ENCODE measurements at regions of chr16 and their contacts with region 1.

Region 1: GRCh38 chr16:3134564-3135417 is at the start of gene ZNF213:
- DNase-seq: peak; percentile 79 to 99 (median 89)
- ATAC-seq: peak; percentile 97
- H3K4me3 ChIP-seq: peak within 1 kb of the TSS; percentile 84
- H3K4me3 Mint-ChIP-seq: peak within 1 kb of the TSS; percentile 99
- H3K27ac ChIP-seq: peak within 1 kb of the TSS; percentile 91 to 92
- H3K27ac Mint-ChIP-seq: peak within 1 kb of the TSS; percentile 94
- H3K4me1 ChIP-seq: peaks cover 29% of the 10 kb centered on the region
- H3K4me1 Mint-ChIP-seq: peaks cover 38% of the 10 kb centered on the region
- H3K27me3 ChIP-seq: no peaks in the 10 kb centered on the region
- H3K27me3 Mint-ChIP-seq: no peaks in the 10 kb centered on the region
- CTCF ChIP-seq: no peak
- total RNA-seq, gene ZNF213: 1.6 to 2.2 TPM

Region 2: GRCh38 chr16:2795714-2796143 is 339.1 kb before region 1 on chr16:
- CTCF ChIA-PET with region 1: no interaction called
- POLR2A ChIA-PET with region 1: no interaction called
- intact Hi-C with region 1: no loop called
- DNase-seq: no peak
- ATAC-seq: no peak
- H3K4me3 ChIP-seq: no peak overlapping the region
- H3K4me3 Mint-ChIP-seq: no peak overlapping the region
- H3K27ac ChIP-seq: no peak overlapping the region
- H3K27ac Mint-ChIP-seq: no peak overlapping the region
- H3K4me1 ChIP-seq: no peaks in the 10 kb centered on the region
- H3K4me1 Mint-ChIP-seq: no peaks in the 10 kb centered on the region
- H3K27me3 ChIP-seq: no peaks in the 10 kb centered on the region
- H3K27me3 Mint-ChIP-seq: peaks cover 28% of the 10 kb centered on the region
- CTCF ChIP-seq: no peak

Region 3: DNA sequence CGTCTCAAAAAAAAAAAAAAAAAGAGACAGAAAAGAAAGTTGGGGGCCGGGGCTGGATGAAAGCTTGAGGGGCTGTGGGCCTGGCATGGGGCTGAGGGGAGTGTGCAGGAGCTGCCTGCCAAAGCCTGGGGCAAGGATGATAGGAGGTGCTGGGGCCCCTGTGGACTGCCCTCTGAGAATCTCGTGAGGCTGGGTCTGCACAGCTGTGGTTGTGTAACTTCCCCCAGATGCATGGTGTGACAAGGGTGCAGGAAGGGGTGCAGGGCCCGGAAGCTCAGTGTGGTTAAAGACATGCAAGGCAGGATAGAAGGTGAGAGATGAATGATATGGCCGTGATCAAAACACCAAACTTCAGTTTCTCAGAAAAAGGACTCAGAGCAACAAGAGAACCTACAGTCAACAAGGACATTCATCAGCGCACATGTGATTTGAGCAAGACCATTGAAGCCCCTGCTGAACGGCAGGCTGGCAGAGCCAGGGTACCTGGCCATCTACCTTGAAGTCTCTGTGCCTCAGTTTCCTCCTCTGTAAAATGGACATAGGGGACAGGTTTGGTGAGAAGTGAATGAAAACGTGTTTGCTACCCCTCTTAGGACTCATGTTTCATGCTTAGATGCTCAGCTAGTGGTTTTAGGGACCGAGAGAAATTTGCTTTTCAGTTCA is 59.8 kb before region 1 on chr16:
- CTCF ChIA-PET with region 1: interaction called, 24 read pairs
- POLR2A ChIA-PET with region 1: interaction called, 58 read pairs
- intact Hi-C with region 1: no loop called
- DNase-seq: peak; percentile 58 to 95 (median 82)
- ATAC-seq: peak; percentile 89
- H3K4me3 ChIP-seq: peak overlapping the region; percentile 34
- H3K4me3 Mint-ChIP-seq: peak overlapping the region; percentile 77
- H3K27ac ChIP-seq: peak overlapping the region; percentile 80 to 86
- H3K27ac Mint-ChIP-seq: peak overlapping the region; percentile 95
- H3K4me1 ChIP-seq: peaks cover 96% of the 10 kb centered on the region
- H3K4me1 Mint-ChIP-seq: peaks cover 93% of the 10 kb centered on the region
- H3K27me3 ChIP-seq: no peaks in the 10 kb centered on the region
- H3K27me3 Mint-ChIP-seq: no peaks in the 10 kb centered on the region
- CTCF ChIP-seq: no peak

Region 4: GRCh38 chr16:3123986-3124886 is 10.6 kb before region 1 on chr16:
- CTCF ChIA-PET with region 1: interaction called, 3 read pairs
- POLR2A ChIA-PET with region 1: interaction called, 12 read pairs
- intact Hi-C with region 1: loop called in 1 of 2 experiments (anchors 1 kb)
- DNase-seq: peak; percentile 93 to 98 (median 96)
- ATAC-seq: peak; percentile 89
- H3K4me3 ChIP-seq: peak overlapping the region; percentile 77
- H3K4me3 Mint-ChIP-seq: peak overlapping the region; percentile 98
- H3K27ac ChIP-seq: peak overlapping the region; percentile 70 to 71
- H3K27ac Mint-ChIP-seq: peak overlapping the region; percentile 92
- H3K4me1 ChIP-seq: peaks cover 37% of the 10 kb centered on the region
- H3K4me1 Mint-ChIP-seq: peaks cover 49% of the 10 kb centered on the region
- H3K27me3 ChIP-seq: no peaks in the 10 kb centered on the region
- H3K27me3 Mint-ChIP-seq: no peaks in the 10 kb centered on the region
- CTCF ChIP-seq: peak; percentile 41

Region 5: GRCh38 chr16:3158471-3159314 is 23.9 kb after region 1 on chr16:
- CTCF ChIA-PET with region 1: interaction called, 15 read pairs
- POLR2A ChIA-PET with region 1: interaction called, 27 read pairs
- intact Hi-C with region 1: loop called (anchors 2 kb)
- DNase-seq: peak; percentile 92 to 98 (median 94)
- ATAC-seq: peak; percentile 89
- H3K4me3 ChIP-seq: peak overlapping the region; percentile 85
- H3K4me3 Mint-ChIP-seq: peak overlapping the region; percentile 97
- H3K27ac ChIP-seq: peak overlapping the region; percentile 39 to 55
- H3K27ac Mint-ChIP-seq: peak overlapping the region; percentile 97
- H3K4me1 ChIP-seq: peaks cover 28% of the 10 kb centered on the region
- H3K4me1 Mint-ChIP-seq: peaks cover 18% of the 10 kb centered on the region
- H3K27me3 ChIP-seq: no peaks in the 10 kb centered on the region
- H3K27me3 Mint-ChIP-seq: peaks cover 7% of the 10 kb centered on the region
- CTCF ChIP-seq: no peak

Measured in CD4-positive, alpha-beta T cell (primary cell).